Dendritic cell treated with granulocyte-macrophage colony-stimulating factor and Interleukin-4, amounts not matched to agents 40 ng/mL and 50 ng/mL, for 4 days (primary cell): ENCODE measurements at regions of chr5 and their contacts with region 1.

Region 1: DNA sequence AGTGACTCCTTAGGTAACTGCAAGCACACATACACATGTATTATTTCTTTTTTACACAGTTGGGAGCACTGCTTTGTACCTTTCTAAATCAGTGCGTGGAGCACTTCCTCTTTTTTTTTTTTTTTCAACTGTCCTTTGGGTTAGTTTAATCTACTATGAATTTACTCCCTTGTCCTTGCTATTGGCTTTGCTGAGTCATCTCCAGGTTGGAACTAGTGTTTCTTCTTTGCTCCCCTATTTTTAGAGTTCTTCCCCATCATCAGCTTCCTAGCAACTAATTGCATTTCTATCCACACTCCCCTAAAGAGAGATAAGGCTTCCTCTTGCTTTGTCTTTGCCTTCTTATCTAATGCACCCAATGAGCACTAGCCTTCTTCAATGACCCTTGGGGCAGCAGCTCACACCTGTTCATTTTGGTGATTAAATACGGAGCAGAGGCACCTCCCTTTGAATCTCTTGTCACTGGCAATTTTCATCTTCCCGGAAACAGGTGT is 24.3 kb downstream of the S100Z start:
- H3K4me3 Mint-ChIP-seq: no peak overlapping the region
- H3K27ac Mint-ChIP-seq: peak overlapping the region; percentile 20
- H3K4me1 Mint-ChIP-seq: peaks cover 21% of the 10 kb centered on the region
- H3K27me3 Mint-ChIP-seq: no peaks in the 10 kb centered on the region

Region 2: GRCh38 chr5:76521240-76521758 is 352.8 kb before region 1 on chr5:
- intact Hi-C with region 1: no loop called
- H3K4me3 Mint-ChIP-seq: no peak overlapping the region
- H3K27ac Mint-ChIP-seq: peak overlapping the region; percentile 74
- H3K4me1 Mint-ChIP-seq: peaks cover 10% of the 10 kb centered on the region
- H3K27me3 Mint-ChIP-seq: no peaks in the 10 kb centered on the region

Region 3: GRCh38 chr5:76958991-76959767 is 85.0 kb after region 1 on chr5:
- intact Hi-C with region 1: loop called (anchors 5 kb)
- H3K4me3 Mint-ChIP-seq: peak overlapping the region; percentile 30
- H3K27ac Mint-ChIP-seq: peak overlapping the region; percentile 79
- H3K4me1 Mint-ChIP-seq: peaks cover 46% of the 10 kb centered on the region
- H3K27me3 Mint-ChIP-seq: peaks cover 23% of the 10 kb centered on the region